Head of caudate nucleus (tissue), 42 donors: ENCODE measurements at regions of chr5 and their contacts with region 1.

Region 1: DNA sequence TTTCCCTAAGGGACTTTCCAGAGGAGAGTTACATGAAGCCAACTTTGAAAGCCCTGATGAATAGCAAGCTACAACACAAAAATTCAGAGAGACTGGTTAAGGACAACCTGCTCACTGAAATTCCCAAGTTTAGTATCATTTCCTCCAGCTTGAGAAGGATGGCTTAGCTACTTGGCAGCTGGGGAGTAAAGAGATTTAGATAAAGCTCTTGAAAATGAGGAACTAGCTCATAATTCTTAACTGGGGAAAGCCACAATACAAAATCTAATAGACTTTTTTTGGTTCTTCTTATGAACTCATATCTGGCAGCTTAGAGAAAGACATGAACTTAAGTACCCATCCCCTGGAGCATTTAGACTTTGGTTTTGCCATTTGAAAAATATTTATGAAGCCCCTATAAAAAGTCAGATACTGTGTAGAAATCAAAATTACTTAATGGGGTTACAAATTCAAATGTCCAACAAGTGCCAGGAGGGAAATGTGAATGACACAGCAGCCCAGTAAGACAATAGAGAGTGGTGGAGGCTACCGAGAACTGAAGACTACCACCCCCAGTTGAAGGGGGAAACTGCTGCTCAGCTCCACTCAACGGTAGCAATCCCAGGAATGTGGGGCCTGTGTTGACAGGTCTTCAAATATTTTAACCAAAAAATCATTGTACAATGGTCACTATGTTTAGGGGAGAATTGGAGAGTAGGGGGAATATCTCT is 79.4 kb upstream of the ADRB2 start:
- DNase-seq: no peak

Region 2: GRCh38 chr5:148708854-148709253 is 38.1 kb before region 1 on chr5:
- intact Hi-C with region 1: no loop called
- DNase-seq: peak in 2 of 42 donors; percentile 5 to 15

Region 3: GRCh38 chr5:148805326-148806290 is 58.6 kb after region 1 on chr5:
- intact Hi-C with region 1: loop called (anchors 5 kb)
- DNase-seq: peak in 27 of 42 donors; percentile 15 to 72 (median 34)

Region 4: GRCh38 chr5:148887123-148887881 is 140.3 kb after region 1 on chr5:
- intact Hi-C with region 1: no loop called
- DNase-seq: no peak

Region 5: GRCh38 chr5:148928141-148928540 is 181.2 kb after region 1 on chr5:
- intact Hi-C with region 1: no loop called
- DNase-seq: no peak